H1 (cell line): ENCODE measurements at regions of chr16 and their contacts with region 1.

Region 1: GRCh38 chr16:1509307-1510221 is 16.4 kb downstream of the TELO2 start:
- DNase-seq: no peak
- H3K4me3 ChIP-seq: no peak overlapping the region
- H3K27ac ChIP-seq: no peak overlapping the region
- H3K4me1 ChIP-seq: no peaks in the 10 kb centered on the region
- H3K27me3 ChIP-seq: no peaks in the 10 kb centered on the region
- CTCF ChIP-seq: no peak
- EP300 ChIP-seq: no peak
- POLR2A ChIP-seq: no peak
- RAD21 ChIP-seq: no peak

Region 2: GRCh38 chr16:1408171-1408837 is 101.3 kb before region 1 on chr16:
- CTCF ChIA-PET with region 1: no interaction called
- POLR2A ChIA-PET with region 1: no interaction called
- DNase-seq: peak; percentile 38 to 99
- H3K4me3 ChIP-seq: peak overlapping the region; percentile 54 to 76 (median 58)
- H3K27ac ChIP-seq: no peak overlapping the region
- H3K4me1 ChIP-seq: no peaks in the 10 kb centered on the region
- H3K27me3 ChIP-seq: no peaks in the 10 kb centered on the region
- CTCF ChIP-seq: no peak
- EP300 ChIP-seq: no peak
- POLR2A ChIP-seq: no peak
- RAD21 ChIP-seq: no peak

Region 3: DNA sequence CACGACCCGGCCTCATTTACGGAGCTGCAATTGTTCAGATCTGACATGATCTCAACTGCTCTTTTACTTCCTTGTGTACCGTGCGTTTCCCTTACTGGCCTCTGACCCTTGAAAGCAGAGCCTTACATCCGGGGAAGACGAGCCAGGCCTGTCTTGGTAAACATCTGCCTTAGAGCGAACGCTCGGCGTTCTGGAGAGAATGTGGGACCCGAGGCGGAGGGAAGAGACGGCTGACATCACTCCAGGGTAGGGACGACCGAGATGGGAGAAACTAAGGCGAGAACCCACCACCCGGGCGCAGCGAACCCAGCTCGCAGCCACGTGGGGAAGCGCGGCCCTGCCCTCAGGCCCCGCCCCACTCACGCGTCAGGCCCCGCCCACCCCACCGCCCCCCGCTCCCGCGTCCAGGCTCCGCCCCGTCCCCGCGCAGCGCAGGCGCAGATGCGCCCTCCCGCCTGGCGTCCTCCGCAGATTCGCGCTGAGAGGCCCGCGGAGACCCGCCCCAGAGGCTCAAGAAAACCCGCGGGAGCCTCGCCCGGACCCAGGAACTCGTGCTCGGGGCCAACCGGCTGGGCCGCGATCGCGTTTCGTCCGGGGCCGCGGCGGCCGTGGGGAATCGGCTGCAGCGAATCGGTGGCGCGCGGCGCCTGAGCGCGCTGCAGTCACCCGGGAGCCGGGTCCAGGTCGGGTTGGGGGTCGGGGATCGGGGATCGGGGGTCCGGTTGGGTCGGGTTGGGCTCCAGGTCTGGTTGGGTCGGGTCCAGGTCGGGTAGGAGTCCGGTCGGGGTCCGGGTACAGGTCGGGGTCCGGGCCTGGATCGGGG is 16.4 kb before region 1 on chr16 and contains the start of gene TELO2:
- CTCF ChIA-PET with region 1: interaction called, 6 read pairs
- POLR2A ChIA-PET with region 1: interaction called, 175 read pairs
- DNase-seq: peak; percentile 23 to 91
- H3K4me3 ChIP-seq: peak within 1 kb of the TSS; percentile 86 to 93 (median 90)
- H3K27ac ChIP-seq: peak within 1 kb of the TSS; percentile 97
- H3K4me1 ChIP-seq: peaks cover 0 to 8% (median 5%) of the 10 kb centered on the region in 4 experiments; a peak in 4 of 7 replicates
- H3K27me3 ChIP-seq: no peaks in the 10 kb centered on the region
- CTCF ChIP-seq: no peak
- EP300 ChIP-seq: peak in 1 of 2 experiments; percentile 98; a peak in 1 of 3 replicates
- POLR2A ChIP-seq: peak in 1 of 2 experiments; percentile 66; a peak in 1 of 3 replicates
- RAD21 ChIP-seq: no peak
- total RNA-seq, gene TELO2: 64.8 and 66.4 TPM in 2 replicates

Region 4: GRCh38 chr16:1527836-1528811 is 18.6 kb after region 1 on chr16:
- CTCF ChIA-PET with region 1: interaction called, 3 read pairs
- POLR2A ChIA-PET with region 1: interaction called, 56 read pairs
- DNase-seq: no peak
- H3K4me3 ChIP-seq: no peak overlapping the region
- H3K27ac ChIP-seq: no peak overlapping the region
- H3K4me1 ChIP-seq: no peaks in the 10 kb centered on the region; a peak in 1 of 7 replicates
- H3K27me3 ChIP-seq: no peaks in the 10 kb centered on the region
- CTCF ChIP-seq: no peak
- EP300 ChIP-seq: no peak
- POLR2A ChIP-seq: no peak
- RAD21 ChIP-seq: no peak

Region 5: DNA sequence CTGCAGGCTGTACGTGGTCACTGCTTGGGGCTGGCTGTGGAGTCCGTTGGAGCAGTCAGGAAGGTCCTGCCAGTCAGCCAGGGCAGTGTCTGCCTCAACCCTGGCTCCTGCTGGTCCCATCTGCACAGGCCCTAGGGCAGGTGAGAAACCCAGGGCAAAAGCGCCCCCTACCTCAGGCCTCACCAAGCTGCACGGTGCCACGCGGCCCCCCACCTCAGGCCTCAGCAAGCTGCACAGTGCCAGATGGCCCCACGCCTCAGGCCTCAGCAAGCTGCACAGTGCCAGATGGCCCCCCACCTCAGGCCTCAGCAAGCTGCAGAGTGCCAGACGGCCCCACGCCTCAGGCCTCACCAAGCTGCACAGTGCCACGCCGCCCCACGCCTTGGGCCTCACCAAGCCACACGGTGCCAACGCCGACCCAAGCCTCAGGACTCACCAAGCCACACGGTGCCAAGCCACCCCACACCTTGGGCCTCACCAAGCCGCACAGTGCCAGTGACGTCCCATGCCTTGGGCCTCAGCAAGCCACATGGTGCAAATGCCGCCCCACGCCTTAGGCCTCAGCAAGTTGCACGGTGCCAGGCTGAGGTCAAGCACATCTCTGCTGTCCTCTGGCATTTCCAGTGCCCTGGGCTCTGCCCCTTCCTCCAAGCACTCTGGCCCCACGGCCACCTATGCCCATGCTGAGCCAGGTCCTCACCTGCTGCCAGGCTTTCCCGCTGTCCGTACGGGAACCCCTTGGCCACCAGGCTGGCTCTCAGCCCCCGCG is 29.4 kb after region 1 on chr16:
- CTCF ChIA-PET with region 1: interaction called, 10 read pairs
- POLR2A ChIA-PET with region 1: interaction called, 4 read pairs
- DNase-seq: peak in 1 of 2 experiments; percentile 71
- H3K4me3 ChIP-seq: no peak overlapping the region
- H3K27ac ChIP-seq: no peak overlapping the region
- H3K4me1 ChIP-seq: no peaks in the 10 kb centered on the region
- H3K27me3 ChIP-seq: no peaks in the 10 kb centered on the region
- CTCF ChIP-seq: peak; percentile 56 to 69 (median 62)
- EP300 ChIP-seq: no peak
- POLR2A ChIP-seq: no peak
- RAD21 ChIP-seq: peak; percentile 58 to 69